Sciatic nerve (tissue), 2 donors: ENCODE measurements at regions of chr2 and their contacts with region 1.

Region 1: GRCh38 chr2:23772684-23773083 is 154.2 kb downstream of the ATAD2B start:
- DNase-seq: no peak
- ATAC-seq: no peak

Region 2: DNA sequence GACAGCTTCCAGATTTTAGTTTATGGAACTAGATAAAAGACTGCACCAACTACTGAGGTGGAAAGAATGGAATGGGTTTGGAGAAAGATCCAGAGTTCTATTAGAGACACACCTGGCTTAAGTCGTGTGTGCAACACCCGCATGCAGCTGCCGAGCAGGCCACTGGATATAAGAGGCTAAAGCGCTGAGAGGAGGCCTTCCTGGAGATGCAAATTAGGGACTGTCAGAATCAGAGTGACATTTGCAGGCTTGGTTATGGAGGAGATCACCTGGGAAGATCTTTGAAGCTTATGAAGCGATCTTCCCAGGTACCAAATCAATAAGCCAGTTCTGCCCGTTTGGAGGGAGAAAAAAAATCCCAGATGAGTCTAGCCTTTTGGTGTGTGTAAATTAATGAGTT is 418.1 kb before region 1 on chr2:
- intact Hi-C with region 1: no loop called
- DNase-seq: no peak
- ATAC-seq: no peak

Region 3: DNA sequence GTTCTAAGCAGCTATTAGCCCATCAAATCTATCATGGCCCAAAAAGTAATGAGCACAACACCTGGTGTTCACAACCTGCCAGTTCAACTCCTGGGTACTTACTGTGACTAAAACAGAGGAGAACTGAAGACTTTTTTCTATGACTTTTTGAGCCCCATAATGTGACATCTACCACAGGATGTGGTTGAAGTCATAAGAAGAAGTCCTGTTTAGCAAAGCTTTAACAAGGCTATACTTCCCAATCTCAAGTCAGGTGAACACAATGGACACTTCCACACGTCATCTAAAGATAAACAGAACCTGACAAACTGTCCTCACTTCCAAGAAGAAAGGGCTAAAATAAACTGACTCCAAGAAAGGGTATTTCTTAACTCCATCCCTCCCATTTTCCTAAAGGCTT is 15.4 kb after region 1 on chr2:
- intact Hi-C with region 1: no loop called
- DNase-seq: no peak
- ATAC-seq: no peak

Region 4: DNA sequence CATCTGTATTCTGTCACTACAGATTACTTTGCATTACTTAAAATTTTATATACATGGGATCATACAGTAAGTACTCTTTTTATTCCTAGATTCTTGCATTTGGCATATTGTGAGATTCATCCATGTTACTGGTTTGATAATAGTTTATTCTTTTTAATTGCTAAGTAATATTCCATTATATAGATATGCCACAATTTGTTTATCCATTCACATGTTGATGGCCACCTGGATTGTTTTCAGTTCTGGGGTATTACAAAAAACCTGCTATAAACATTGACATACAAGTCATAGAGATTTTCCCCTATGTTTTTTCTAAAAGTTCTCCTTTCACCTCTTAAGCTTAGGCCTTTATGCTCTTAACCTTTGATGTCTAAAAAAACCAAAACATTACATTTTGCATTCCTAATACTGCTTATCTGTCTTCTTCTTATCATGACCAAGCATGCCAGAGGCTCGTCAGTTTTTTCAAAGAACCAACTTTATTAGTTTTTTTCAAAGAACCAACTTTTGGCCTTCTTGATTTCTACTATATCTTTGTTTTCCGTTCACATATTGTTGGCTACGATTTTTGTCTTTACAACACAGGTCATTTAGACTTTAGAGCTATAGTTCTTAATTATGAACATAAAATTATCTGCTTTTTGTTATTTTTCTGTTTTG is 67.4 kb after region 1 on chr2:
- intact Hi-C with region 1: loop called (anchors 2 kb)
- DNase-seq: no peak
- ATAC-seq: no peak

Region 5: GRCh38 chr2:24421668-24422067 is 649.0 kb after region 1 on chr2:
- intact Hi-C with region 1: no loop called
- DNase-seq: peak; percentile 81
- ATAC-seq: peak; percentile 85